Dorsolateral prefrontal cortex (tissue), 120 donors: ENCODE measurements at regions of chr3 and their contacts with region 1.

Region 1: DNA sequence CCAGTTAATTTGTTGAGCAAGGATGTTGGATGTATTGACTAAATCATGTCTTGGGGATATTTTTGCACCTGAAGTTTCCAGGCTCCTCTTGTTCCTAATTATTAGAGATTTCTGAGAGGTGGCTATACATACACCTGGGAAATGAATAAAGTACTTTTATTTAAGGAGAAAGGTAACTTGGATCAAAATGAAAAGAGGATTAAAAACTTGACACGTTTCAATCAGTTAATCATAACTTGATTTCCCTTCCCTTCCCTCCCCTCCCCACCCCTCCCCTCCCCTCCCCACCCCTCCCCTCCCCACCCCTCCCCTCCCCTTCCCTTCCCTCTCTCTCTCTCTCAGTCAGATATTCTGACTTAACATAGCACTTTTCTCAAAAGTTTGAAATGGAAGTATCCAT is 126.3 kb downstream of the KCNH8 start:
- DNase-seq: no peak
- H3K4me3 ChIP-seq: no peak overlapping the region
- H3K27ac ChIP-seq: no peak overlapping the region
- H3K27me3 ChIP-seq: peaks cover 0 to 11% (median 0%) of the 10 kb centered on the region in 45 donors
- CTCF ChIP-seq: no peak

Region 2: DNA sequence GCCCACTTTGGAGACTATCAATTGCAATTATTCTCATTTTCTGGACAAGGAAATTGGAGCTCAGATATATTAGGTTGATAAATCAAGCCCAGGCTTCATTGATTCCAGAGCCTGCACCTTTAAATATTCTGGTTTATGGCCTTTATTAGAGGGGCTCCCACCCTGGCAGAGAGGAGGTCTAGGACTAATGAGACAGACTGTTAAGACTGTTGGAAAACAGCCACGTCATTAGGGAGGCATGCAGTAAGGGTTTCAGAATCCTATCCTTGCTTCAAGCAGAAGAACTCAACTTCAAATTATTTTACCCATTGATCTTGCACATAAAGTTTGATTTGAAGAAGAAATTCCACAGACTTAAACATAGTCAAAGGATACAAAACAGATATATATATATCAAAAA is 160.1 kb before region 1 on chr3:
- intact Hi-C with region 1: no loop called
- DNase-seq: no peak
- H3K4me3 ChIP-seq: no peak overlapping the region
- H3K27ac ChIP-seq: no peak overlapping the region
- H3K27me3 ChIP-seq: peaks cover 0 to 5% (median 0%) of the 10 kb centered on the region in 45 donors
- CTCF ChIP-seq: no peak

Region 3: GRCh38 chr3:19295208-19295607 is 20.6 kb after region 1 on chr3:
- intact Hi-C with region 1: loop called in 1 of 2 experiments (anchors 2 kb)
- DNase-seq: no peak
- H3K4me3 ChIP-seq: no peak overlapping the region
- H3K27ac ChIP-seq: no peak overlapping the region
- H3K27me3 ChIP-seq: peaks cover 0 to 6% (median 0%) of the 10 kb centered on the region in 45 donors
- CTCF ChIP-seq: no peak